K562 (cell line): ENCODE measurements at regions of chr16 and their contacts with region 1.

Region 1: GRCh38 chr16:2147981-2148671 is at the start of gene RAB26:
- DNase-seq: peak; percentile 81 to 86 (median 84)
- ATAC-seq: peak; percentile 61
- H3K4me3 ChIP-seq: peak within 1 kb of the TSS; percentile 48
- H3K27ac ChIP-seq: peak within 1 kb of the TSS; percentile 82; the same call in 1 of the 3 replicates
- H3K4me1 ChIP-seq: peaks cover 36 to 74% of the 10 kb centered on the region in 2 experiments
- H3K27me3 ChIP-seq: no peaks in the 10 kb centered on the region
- CTCF ChIP-seq: no peak
- EP300 ChIP-seq: no peak
- POLR2A ChIP-seq: no peak
- RAD21 ChIP-seq: no peak
- polyA plus RNA-seq, gene RAB26: 0.25 to 0.63 TPM

Region 2: GRCh38 chr16:2023098-2023925 is 124.8 kb before region 1 on chr16:
- CTCF ChIA-PET with region 1: interaction called, 15 read pairs
- POLR2A ChIA-PET with region 1: interaction called, 35 read pairs
- in situ Hi-C with region 1: loop called (anchors 5 kb)
- intact Hi-C with region 1: no loop called
- DNase-seq: peak; percentile 90 to 96 (median 92)
- ATAC-seq: peak; percentile 85
- H3K4me3 ChIP-seq: peak overlapping the region; percentile 41
- H3K27ac ChIP-seq: peak overlapping the region; percentile 76
- H3K4me1 ChIP-seq: peaks cover 21 to 79% of the 10 kb centered on the region in 2 experiments; a peak in 4 of 5 replicates
- H3K27me3 ChIP-seq: no peaks in the 10 kb centered on the region
- CTCF ChIP-seq: peak; percentile 93 to 97 (median 96)
- EP300 ChIP-seq: no peak
- POLR2A ChIP-seq: peak; percentile 69
- RAD21 ChIP-seq: peak; percentile 90 to 94

Region 3: GRCh38 chr16:2082160-2082982 is 65.8 kb before region 1 on chr16:
- CTCF ChIA-PET with region 1: no interaction called
- POLR2A ChIA-PET with region 1: interaction called, 3 read pairs
- in situ Hi-C with region 1: loop called (anchors 10 kb)
- intact Hi-C with region 1: no loop called
- DNase-seq: no peak
- ATAC-seq: no peak; the same call in 2 of the 3 replicates
- H3K4me3 ChIP-seq: no peak overlapping the region
- H3K27ac ChIP-seq: no peak overlapping the region
- H3K4me1 ChIP-seq: peaks cover 0 to 43% of the 10 kb centered on the region in 2 experiments; a peak in 2 of 5 replicates
- H3K27me3 ChIP-seq: no peaks in the 10 kb centered on the region
- CTCF ChIP-seq: no peak
- EP300 ChIP-seq: no peak
- POLR2A ChIP-seq: no peak
- RAD21 ChIP-seq: no peak